ENCODE measurements at regions of chr5 and their contacts with region 1.

Region 1: GRCh38 chr5:73088026-73088425 is 32.3 kb upstream of the TMEM171 start:
- DNase-seq: no peak
- ATAC-seq: no peak
- H3K4me3 ChIP-seq: no peak overlapping the region
- H3K27ac ChIP-seq: no peak overlapping the region
- H3K4me1 ChIP-seq: no peaks in the 10 kb centered on the region
- H3K27me3 ChIP-seq: no peaks in the 10 kb centered on the region
- CTCF ChIP-seq: no peak
- POLR2A ChIP-seq: no peak

Region 2: DNA sequence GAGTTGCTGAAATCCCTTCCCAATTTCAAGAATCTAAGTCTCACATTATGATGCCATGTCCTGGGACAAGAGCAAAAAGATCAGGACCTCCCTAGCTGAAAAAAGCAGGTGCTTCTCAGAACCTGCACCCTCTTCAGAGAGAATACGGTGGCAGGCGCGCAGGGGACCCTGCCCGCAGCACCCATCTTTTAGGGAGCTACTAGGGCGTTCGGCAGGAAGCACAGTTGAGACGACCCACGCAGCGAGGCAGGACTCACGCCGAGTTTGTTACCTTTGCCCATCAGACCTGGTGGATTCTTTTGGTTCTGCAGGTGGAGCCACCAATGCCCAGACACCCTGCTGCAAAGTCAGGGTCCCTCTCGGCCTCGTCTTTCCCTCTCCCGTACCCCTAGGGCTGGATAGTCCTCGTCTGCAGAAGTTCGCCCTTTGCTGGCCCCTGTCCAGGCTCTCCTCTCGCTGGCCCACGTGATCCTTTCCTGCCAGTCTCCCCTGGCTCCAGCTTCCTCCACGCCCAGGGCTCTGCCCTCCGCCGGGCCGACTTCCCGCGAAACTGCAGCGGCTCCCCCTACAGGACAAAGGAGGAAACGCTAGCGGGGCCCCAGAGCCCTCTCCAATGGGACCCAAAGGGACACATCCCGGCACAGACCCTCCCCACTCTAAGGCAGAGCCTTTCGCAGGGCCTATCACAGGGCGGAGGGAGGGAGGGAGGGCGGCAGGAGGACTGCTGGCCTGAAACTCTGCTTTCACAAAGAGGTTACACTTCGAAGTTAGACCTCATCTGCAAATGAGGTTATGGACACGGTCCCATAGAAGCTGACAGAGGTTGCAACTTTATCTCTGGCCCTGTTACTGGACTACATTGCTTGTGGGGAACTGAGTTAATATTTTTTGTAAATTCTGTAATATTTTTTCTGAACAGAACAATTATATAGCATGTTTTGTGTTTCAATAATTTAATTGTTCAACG is 113.8 kb after region 1 on chr5:
- intact Hi-C with region 1: loop called in 1 of 2 experiments (anchors 10 kb)
- DNase-seq: peak; percentile 83 to 89 (median 84)
- ATAC-seq: peak; percentile 97 to 99 (median 98)
- H3K4me3 ChIP-seq: peak overlapping the region in 1 of 3 donors; percentile 14
- H3K27ac ChIP-seq: no peak overlapping the region
- H3K4me1 ChIP-seq: peaks cover 0 to 7% (median 0%) of the 10 kb centered on the region in 4 donors
- H3K27me3 ChIP-seq: no peaks in the 10 kb centered on the region
- CTCF ChIP-seq: peak; percentile 73 to 87 (median 82)
- POLR2A ChIP-seq: no peak

Measured in right lobe of liver (tissue), 6 donors.